Left ventricle myocardium inferior (tissue), 1 donor: ENCODE measurements at regions of chr10 and their contacts with region 1.

Region 1: GRCh38 chr10:94320285-94320914 is 42.3 kb downstream of the NOC3L start:
- DNase-seq: peak; percentile 56
- H3K4me3 ChIP-seq: no peak overlapping the region
- H3K27ac ChIP-seq: no peak overlapping the region
- H3K4me1 ChIP-seq: peaks cover 3% of the 10 kb centered on the region
- H3K27me3 ChIP-seq: no peaks in the 10 kb centered on the region
- CTCF ChIP-seq: peak; percentile 88

Region 2: GRCh38 chr10:93916257-93917063 is 403.9 kb before region 1 on chr10:
- intact Hi-C with region 1: loop called (anchors 5 kb)
- DNase-seq: no peak
- H3K4me3 ChIP-seq: peak overlapping the region; percentile 43
- H3K27ac ChIP-seq: no peak overlapping the region
- H3K4me1 ChIP-seq: peaks cover 11% of the 10 kb centered on the region
- H3K27me3 ChIP-seq: no peaks in the 10 kb centered on the region
- CTCF ChIP-seq: peak; percentile 72

Region 3: DNA sequence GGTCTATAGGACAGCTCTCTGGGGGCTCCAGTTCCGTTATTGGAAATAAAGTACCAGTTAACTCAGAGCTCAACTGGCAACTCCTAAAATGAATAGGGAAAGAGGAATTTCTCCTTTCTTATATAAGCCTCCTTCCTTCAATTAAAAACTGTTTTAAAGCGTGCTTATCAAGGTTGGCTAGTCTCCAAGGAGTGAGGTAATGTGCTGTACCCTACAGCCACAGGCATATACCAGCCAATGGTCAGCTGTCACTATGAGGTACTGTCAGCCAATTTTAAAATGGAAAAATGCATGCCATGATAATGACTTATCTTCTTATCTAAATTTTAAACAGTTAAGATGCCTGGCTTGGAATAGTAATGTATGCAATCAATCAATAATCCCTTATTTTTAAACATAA is 250.5 kb before region 1 on chr10:
- intact Hi-C with region 1: loop called (anchors 5 kb)
- DNase-seq: no peak
- H3K4me3 ChIP-seq: no peak overlapping the region
- H3K27ac ChIP-seq: no peak overlapping the region
- H3K4me1 ChIP-seq: peaks cover 9% of the 10 kb centered on the region
- H3K27me3 ChIP-seq: no peaks in the 10 kb centered on the region
- CTCF ChIP-seq: no peak

Region 4: DNA sequence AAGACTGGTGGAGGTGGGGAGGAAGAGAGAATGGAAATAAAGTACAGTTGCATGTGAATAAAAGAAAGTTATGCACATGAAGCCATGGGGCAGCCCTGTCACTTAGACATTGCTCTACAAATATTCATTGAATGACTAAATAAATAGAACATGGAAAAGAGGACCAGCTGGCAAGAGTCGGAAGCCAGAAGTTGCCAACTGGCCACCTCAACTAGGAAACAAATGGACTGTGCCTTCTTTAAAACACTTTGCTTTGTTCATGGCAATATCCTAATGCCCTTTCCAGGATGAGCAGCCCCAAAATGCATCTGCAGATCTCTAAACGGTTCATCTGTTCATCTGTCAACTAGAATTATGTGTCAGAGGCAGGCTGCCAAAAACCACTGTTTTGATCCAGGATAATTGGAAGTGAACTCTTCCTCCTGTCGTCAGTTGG is 115.0 kb before region 1 on chr10:
- intact Hi-C with region 1: no loop called
- DNase-seq: no peak
- H3K4me3 ChIP-seq: no peak overlapping the region
- H3K27ac ChIP-seq: no peak overlapping the region
- H3K4me1 ChIP-seq: peaks cover 36% of the 10 kb centered on the region
- H3K27me3 ChIP-seq: no peaks in the 10 kb centered on the region
- CTCF ChIP-seq: no peak

Region 5: DNA sequence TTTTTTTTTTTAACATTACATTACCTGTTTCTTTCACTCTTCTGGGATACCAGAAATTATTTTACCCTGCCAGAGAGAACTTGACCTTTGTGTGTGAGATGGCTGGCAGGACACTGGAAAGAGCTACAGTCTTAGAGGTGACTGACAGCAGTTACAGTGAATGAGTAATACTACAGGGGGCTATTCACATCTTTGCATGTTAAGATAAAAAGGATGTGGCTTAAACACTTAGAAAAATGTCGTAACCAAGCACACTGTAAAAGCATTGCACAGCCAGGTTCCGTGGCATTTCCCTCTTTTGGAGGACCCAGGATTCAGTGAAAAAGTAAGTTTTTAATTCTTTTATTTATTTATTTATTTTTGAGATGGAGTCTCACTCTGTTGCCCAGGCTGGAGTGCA is 63.1 kb after region 1 on chr10:
- intact Hi-C with region 1: no loop called
- DNase-seq: no peak
- H3K4me3 ChIP-seq: no peak overlapping the region
- H3K27ac ChIP-seq: no peak overlapping the region
- H3K4me1 ChIP-seq: no peaks in the 10 kb centered on the region
- H3K27me3 ChIP-seq: peaks cover 2% of the 10 kb centered on the region
- CTCF ChIP-seq: no peak

Region 6: GRCh38 chr10:94439275-94439861 is 119.0 kb after region 1 on chr10:
- intact Hi-C with region 1: no loop called
- DNase-seq: no peak
- H3K4me3 ChIP-seq: no peak overlapping the region
- H3K27ac ChIP-seq: no peak overlapping the region
- H3K4me1 ChIP-seq: peaks cover 9% of the 10 kb centered on the region
- H3K27me3 ChIP-seq: no peaks in the 10 kb centered on the region
- CTCF ChIP-seq: no peak